AG04450 (cell line): ENCODE measurements at regions of chr3 and their contacts with region 1.

Region 1: DNA sequence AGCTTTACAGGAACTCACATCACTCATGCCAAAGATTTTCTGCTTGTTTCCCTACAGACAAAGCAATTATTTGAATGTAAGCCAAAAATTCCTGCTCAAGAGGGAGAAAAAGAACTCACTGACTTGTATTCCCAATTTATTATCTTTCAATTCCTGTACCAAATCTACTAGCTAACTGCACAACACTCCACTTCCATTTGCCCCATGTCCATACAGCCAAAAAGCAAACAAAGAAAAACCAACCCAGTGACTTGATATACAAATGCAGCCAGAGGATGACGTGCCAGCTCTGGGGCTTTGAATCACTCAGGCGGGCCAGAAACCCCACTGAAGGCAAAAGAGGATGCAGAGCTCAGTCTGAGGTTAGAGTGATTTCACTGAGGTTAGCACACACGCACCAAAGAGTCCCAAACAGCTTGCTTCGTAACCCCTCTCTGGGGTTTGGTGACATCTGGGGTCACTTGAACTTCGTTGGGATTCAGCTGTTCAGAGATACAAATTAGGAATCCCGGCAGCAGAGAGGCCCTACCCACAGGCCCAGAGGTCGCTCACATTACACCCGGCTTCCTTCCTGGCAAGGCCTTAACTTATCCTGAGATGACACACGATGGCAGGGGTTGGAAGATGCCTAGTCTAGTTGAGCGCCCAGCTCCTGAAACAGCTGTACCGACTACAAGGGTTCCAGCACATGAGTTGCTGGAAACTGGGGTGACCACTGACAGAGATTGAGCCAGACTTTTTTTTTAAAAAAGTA is 1.6 kb downstream of the RFTN1 start:
- DNase-seq: peak; percentile 30
- H3K4me3 ChIP-seq: peak overlapping the region; percentile 96
- H3K27ac ChIP-seq: peak overlapping the region; percentile 87
- H3K27me3 ChIP-seq: no peaks in the 10 kb centered on the region
- CTCF ChIP-seq: no peak

Region 2: DNA sequence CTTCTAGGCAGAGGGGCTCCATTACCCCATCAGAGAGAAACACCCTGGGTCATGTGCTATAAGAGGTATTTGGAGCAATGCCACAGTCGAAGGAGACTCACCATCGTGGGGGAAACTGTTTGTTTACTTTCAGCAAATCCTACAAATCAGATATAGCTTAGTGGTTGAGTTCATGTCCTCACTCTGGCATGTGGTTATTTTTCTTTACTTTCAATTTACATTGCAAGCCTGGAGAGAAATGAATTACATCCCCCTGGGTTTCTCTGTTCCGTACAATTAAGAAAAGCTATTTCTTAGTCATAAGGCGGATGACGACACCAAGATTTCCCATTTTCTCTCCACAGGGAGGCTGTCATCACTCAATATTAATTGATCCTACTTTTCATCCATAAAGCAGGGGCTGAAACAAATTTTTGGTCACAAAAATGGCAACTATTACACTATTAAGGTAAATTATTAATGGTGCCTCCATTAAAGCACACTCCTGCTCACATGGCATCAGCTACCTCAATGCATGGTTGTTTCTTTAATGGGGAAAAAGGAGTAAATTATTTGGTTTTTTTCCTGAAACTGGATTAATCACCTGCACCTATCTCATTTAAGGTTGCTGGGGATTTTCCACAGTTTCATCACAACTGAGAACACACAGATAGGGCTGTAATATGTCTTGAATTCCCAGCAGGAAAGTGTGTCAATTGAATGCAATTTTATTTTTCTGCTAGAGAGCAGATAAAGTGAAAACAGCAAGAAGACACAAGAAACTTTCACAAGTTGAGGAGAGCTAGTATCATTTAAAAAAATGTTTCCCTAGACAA is 35.0 kb before region 1 on chr3:
- CTCF ChIA-PET with region 1: interaction called, 3 read pairs
- POLR2A ChIA-PET with region 1: interaction called, 13 read pairs
- DNase-seq: peak; percentile 95
- H3K4me3 ChIP-seq: no peak overlapping the region
- H3K27ac ChIP-seq: peak overlapping the region; percentile 94
- H3K27me3 ChIP-seq: no peaks in the 10 kb centered on the region
- CTCF ChIP-seq: no peak

Region 3: GRCh38 chr3:16838561-16838960 is 326.7 kb after region 1 on chr3:
- CTCF ChIA-PET with region 1: no interaction called
- POLR2A ChIA-PET with region 1: no interaction called
- DNase-seq: no peak
- H3K4me3 ChIP-seq: no peak overlapping the region
- H3K27ac ChIP-seq: no peak overlapping the region
- H3K27me3 ChIP-seq: no peaks in the 10 kb centered on the region
- CTCF ChIP-seq: no peak